ENCODE measurements at regions of chr13 and their contacts with region 1.

Region 1: GRCh38 chr13:98509271-98510155 is 67.4 kb downstream of the STK24 start:
- DNase-seq: peak; percentile 72
- ATAC-seq: peak; percentile 81
- H3K4me3 Mint-ChIP-seq: no peak overlapping the region
- H3K27ac Mint-ChIP-seq: peak overlapping the region; percentile 87
- H3K4me1 Mint-ChIP-seq: peaks cover 90% of the 10 kb centered on the region
- H3K27me3 Mint-ChIP-seq: no peaks in the 10 kb centered on the region
- CTCF ChIP-seq: no peak

Region 2: GRCh38 chr13:98476538-98476966 is 33.0 kb before region 1 on chr13:
- CTCF ChIA-PET with region 1: interaction called, 11 read pairs
- POLR2A ChIA-PET with region 1: interaction called, 4 read pairs
- intact Hi-C with region 1: loop called (anchors 5 kb)
- DNase-seq: peak; percentile 96
- ATAC-seq: peak; percentile 85
- H3K4me3 Mint-ChIP-seq: peak overlapping the region; percentile 56
- H3K27ac Mint-ChIP-seq: peak overlapping the region; percentile 81
- H3K4me1 Mint-ChIP-seq: peaks cover 72% of the 10 kb centered on the region
- H3K27me3 Mint-ChIP-seq: no peaks in the 10 kb centered on the region
- CTCF ChIP-seq: no peak